ENCODE measurements at regions of chr15 and their contacts with region 1.

Region 1: GRCh38 chr15:44676676-44677075 is 13.2 kb upstream of the SPG11 start:
- DNase-seq: no peak
- H3K4me3 Mint-ChIP-seq: peak overlapping the region; percentile 72
- H3K27ac Mint-ChIP-seq: peak overlapping the region; percentile 95
- H3K4me1 Mint-ChIP-seq: peaks cover 60% of the 10 kb centered on the region
- H3K27me3 Mint-ChIP-seq: no peaks in the 10 kb centered on the region

Region 2: GRCh38 chr15:44654858-44655257 is 21.8 kb before region 1 on chr15:
- intact Hi-C with region 1: no loop called
- DNase-seq: no peak
- H3K4me3 Mint-ChIP-seq: no peak overlapping the region
- H3K27ac Mint-ChIP-seq: no peak overlapping the region
- H3K4me1 Mint-ChIP-seq: peaks cover 17% of the 10 kb centered on the region
- H3K27me3 Mint-ChIP-seq: no peaks in the 10 kb centered on the region

Region 3: GRCh38 chr15:44711356-44712107 is 34.9 kb after region 1 on chr15 and contains the start of gene B2M:
- intact Hi-C with region 1: loop called (anchors 2 kb)
- DNase-seq: peak; percentile 95
- H3K4me3 Mint-ChIP-seq: peak within 1 kb of the TSS; percentile 98
- H3K27ac Mint-ChIP-seq: peak within 1 kb of the TSS; percentile 99
- H3K4me1 Mint-ChIP-seq: peaks cover 44% of the 10 kb centered on the region
- H3K27me3 Mint-ChIP-seq: no peaks in the 10 kb centered on the region
- total RNA-seq, gene B2M: 4,961 and 5,148 TPM in 2 replicates

Region 4: DNA sequence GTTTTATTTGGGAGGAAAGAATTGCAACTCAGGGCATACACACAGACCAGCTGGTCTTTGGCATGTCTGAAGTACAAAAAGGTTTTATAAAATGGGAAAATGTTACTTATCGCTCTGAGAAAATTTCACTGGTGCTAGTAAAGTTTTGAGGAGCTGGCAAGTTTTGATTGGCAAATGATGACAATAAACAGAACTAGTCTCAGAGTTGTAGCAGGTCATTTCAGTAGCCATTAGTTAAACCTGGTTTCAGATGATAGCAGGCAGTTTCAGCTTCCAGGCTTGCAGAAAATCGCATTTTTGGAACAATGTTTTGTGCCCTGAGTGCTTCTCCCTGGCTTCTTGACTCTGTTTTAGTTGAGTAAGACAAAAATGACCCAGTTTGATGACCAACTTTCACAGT is 45.3 kb after region 1 on chr15:
- intact Hi-C with region 1: no loop called
- DNase-seq: no peak
- H3K4me3 Mint-ChIP-seq: no peak overlapping the region
- H3K27ac Mint-ChIP-seq: peak overlapping the region; percentile 49
- H3K4me1 Mint-ChIP-seq: peaks cover 66% of the 10 kb centered on the region
- H3K27me3 Mint-ChIP-seq: no peaks in the 10 kb centered on the region